ENCODE measurements at regions of chr22 and their contacts with region 1.

Region 1: GRCh38 chr22:50691521-50691920 is 18.9 kb downstream of the SHANK3 start:
- DNase-seq: peak; percentile 72
- ATAC-seq: peak; percentile 51
- H3K4me3 Mint-ChIP-seq: no peak overlapping the region
- H3K27ac Mint-ChIP-seq: no peak overlapping the region
- H3K4me1 Mint-ChIP-seq: peaks cover 18% of the 10 kb centered on the region
- H3K27me3 Mint-ChIP-seq: peaks cover 18% of the 10 kb centered on the region

Region 2: GRCh38 chr22:50627642-50628542 is 63.6 kb before region 1 on chr22 and contains the start of gene ARSA:
- CTCF ChIA-PET with region 1: interaction called, 15 read pairs
- DNase-seq: peak; percentile 87
- ATAC-seq: peak; percentile 92
- H3K4me3 Mint-ChIP-seq: peak within 1 kb of the TSS; percentile 76
- H3K27ac Mint-ChIP-seq: peak within 1 kb of the TSS; percentile 84
- H3K4me1 Mint-ChIP-seq: peaks cover 28% of the 10 kb centered on the region
- H3K27me3 Mint-ChIP-seq: no peaks in the 10 kb centered on the region
- total RNA-seq, gene ARSA: 49.6 to 68.2 TPM